ENCODE measurements at regions of chr19 and their contacts with region 1.

Region 1: DNA sequence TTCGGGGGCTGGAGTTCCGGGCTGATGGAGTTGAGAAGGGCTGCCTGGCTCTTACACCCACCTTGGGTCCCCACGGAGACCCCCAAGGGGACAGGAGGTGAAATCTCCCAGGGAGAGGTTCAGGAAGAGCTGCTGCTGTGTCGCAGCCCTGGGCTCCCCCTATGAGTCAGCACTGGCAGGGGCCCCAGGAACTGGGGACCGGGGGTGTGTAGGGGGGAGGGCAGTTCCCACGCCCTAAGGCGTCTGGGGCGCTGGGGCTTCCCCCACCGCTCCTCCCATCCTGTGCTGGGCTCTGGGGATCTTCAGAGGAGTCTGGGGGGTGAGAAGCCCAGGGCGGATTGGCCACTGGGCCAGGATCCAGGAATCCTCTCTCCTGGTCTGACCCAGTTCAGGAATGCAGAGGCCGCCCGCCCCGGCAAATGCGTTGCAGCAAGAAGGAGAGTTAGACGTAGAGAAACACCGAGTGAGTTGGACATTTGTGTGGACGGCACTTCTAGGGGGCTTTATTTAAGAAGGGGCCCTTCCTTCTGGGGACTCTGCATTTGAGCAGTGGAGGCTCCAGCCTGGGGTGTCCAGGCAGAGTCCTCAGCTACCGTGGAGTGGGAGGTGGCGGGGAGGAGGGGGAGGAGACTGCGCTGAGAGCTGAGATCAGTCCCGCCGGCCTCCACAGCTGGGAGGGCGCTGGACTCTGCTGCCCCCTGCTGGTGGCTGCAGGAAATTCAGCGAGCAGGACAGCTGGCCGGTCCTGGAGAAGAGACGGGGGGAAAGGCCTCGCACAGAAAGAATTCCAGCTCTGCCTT is 15.0 kb upstream of the NANOS3 start:
- DNase-seq: peak; percentile 97
- H3K4me3 Mint-ChIP-seq: peak overlapping the region; percentile 98
- H3K27ac Mint-ChIP-seq: peak overlapping the region; percentile 98
- H3K4me1 Mint-ChIP-seq: peaks cover 41% of the 10 kb centered on the region
- H3K27me3 Mint-ChIP-seq: peaks cover 24% of the 10 kb centered on the region

Region 2: GRCh38 chr19:13277104-13277809 is 584.7 kb before region 1 on chr19:
- intact Hi-C with region 1: loop called (anchors 2 kb)
- DNase-seq: peak; percentile 93
- H3K4me3 Mint-ChIP-seq: peak overlapping the region; percentile 32
- H3K27ac Mint-ChIP-seq: peak overlapping the region; percentile 79
- H3K4me1 Mint-ChIP-seq: peaks cover 7% of the 10 kb centered on the region
- H3K27me3 Mint-ChIP-seq: peaks cover 8% of the 10 kb centered on the region

Region 3: DNA sequence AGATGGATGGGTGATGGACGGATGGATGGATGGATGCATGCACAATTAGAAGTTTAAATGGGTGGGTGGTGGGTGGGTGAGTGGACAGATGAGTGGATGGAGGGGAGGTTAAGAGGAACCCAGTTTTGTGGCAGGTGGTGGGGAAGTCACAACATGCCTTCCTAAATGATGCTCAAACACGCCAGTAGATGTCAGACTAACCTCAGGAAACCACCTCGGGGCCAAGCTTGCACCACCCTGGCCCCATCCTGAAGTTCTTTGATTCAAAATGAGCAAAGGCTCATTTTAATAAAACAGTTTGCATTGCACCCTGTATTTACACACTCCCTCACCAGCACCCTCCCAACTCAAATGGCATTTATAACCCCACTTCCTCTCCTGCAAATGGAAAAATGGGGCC is 264.3 kb before region 1 on chr19:
- intact Hi-C with region 1: loop called (anchors 1 kb)
- DNase-seq: peak; percentile 85
- H3K4me3 Mint-ChIP-seq: no peak overlapping the region
- H3K27ac Mint-ChIP-seq: no peak overlapping the region
- H3K4me1 Mint-ChIP-seq: peaks cover 2% of the 10 kb centered on the region
- H3K27me3 Mint-ChIP-seq: no peaks in the 10 kb centered on the region

Region 4: DNA sequence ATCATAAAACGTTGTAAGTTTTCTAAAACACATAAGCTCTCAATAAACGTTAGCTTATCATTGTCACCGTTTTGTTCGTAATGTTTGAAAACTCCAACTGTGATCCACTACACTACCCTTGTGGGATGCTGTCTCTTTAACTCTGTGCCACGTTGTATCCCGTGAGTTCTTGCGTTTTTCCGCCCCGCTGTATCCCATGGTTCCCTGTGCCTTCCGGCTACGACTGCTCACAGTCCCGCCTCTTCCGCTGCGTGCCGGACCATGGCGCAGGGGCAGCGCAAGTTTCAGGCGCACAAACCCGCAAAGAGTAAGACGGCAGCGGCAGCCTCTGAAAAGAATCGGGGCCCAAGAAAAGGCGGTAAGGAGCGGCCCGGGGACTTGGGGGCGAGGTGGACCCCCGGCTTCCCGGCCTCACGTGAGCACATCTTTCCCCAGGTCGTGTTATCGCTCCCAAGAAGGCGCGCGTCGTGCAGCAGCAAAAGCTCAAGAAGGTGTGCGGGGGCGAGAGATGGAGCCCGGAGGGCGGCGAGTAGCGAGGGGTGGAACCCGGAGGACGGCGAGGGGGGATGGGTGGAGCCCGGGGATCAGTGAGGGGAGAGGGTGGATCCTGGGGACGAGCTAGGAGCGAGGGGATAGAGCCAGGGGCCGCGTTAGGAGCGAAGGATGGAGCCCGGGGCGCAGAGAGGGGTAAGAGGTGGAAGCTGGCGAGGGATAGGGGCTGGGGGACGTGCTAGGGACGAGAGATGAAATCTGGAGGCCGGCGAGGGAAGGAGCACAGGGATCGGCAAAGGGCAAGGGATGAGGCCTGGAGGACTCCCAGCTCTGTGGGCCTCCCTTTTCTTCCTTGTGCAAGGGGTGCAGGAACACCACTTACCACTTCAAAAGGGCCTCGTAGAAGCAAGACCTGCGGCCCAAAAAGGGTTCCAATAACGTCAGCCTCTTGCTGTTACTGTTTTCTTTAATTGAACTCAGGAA is 87.4 kb before region 1 on chr19 and contains the start of gene C19orf53:
- intact Hi-C with region 1: loop called (anchors 1 kb)
- DNase-seq: peak; percentile 98
- H3K4me3 Mint-ChIP-seq: peak within 1 kb of the TSS; percentile 99
- H3K27ac Mint-ChIP-seq: peak within 1 kb of the TSS; percentile 94
- H3K4me1 Mint-ChIP-seq: peaks cover 20% of the 10 kb centered on the region
- H3K27me3 Mint-ChIP-seq: no peaks in the 10 kb centered on the region
- total RNA-seq, gene C19orf53: 142 and 143 TPM in 2 replicates

Region 5: DNA sequence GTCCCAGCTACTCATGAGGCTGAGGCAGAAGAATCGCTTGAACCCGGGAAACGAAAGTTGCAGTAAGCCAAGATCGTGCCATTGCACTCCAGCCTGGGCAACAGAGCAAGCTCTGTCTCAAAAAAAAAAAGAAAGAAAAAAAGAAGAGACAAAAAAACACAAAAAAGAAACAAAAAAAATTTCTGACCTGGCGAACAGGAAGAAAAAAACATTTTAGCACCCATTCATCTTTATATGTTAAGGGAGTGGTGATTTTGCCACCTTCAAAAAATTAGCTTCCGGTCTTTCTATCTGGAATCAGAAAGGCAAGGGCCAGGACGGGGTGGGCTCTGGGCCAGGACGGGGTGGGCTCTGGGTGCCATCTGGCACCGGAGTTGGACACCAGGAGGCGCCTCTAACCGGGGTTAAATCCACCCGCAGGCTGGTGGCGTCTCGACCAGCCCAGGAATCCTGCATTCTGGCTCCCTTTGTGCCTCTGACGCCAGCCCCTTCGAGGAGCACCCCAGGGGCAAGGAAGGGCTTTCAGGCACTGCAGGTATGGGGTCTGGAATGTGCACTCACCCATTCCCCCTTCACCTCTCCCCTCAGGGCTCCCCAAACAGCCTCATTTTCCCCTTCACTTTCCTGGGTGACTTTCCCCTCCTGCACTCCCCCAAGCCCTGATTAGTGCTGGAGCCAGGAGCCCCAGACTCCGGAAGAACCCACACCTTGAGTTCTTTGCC is 77.0 kb before region 1 on chr19:
- intact Hi-C with region 1: loop called (anchors 1 kb)
- DNase-seq: peak; percentile 91
- H3K4me3 Mint-ChIP-seq: peak overlapping the region; percentile 35
- H3K27ac Mint-ChIP-seq: peak overlapping the region; percentile 25
- H3K4me1 Mint-ChIP-seq: peaks cover 22% of the 10 kb centered on the region
- H3K27me3 Mint-ChIP-seq: no peaks in the 10 kb centered on the region

Region 6: DNA sequence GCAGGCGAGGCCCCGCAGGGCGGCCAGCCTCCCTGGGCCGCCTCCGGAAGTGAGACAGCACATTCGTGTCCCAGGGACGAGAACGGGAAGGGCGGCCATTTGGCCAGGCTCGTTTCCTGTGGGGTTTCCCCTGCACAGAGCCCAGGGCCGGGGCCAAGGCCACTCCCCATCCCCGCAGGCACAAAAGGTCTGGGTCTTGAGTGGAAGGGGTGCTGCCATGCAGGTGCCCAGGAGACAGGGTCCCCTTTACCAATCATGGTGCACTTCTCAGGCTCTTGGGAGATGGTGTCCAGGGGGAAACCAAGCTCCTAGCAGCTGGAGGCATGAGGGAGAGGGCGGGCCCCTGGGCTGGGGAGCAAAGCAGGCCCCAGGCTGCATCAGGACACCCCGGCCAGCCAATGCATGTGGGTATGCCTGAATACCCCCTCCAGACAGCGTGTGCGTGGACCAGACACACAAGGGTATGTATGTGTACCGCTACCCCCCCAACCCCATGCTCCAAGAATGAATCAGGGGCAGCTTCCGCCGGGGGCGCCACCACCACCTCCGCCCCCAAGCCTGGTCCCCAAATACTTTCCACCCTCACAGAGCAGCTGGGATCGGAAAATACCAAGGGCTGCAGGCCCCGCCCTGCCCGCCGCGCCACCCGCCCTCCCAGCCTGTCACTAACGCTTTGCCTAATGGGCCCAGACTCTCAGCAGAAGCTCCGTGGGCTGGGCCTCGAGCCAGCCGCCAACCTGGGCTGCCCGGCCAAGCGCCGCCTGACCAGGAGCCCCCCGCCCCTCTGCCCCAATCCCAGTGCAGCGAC is 22.6 kb before region 1 on chr19:
- intact Hi-C with region 1: loop called (anchors 2 kb)
- DNase-seq: peak; percentile 94
- H3K4me3 Mint-ChIP-seq: peak overlapping the region; percentile 94
- H3K27ac Mint-ChIP-seq: peak overlapping the region; percentile 89
- H3K4me1 Mint-ChIP-seq: peaks cover 37% of the 10 kb centered on the region
- H3K27me3 Mint-ChIP-seq: no peaks in the 10 kb centered on the region

Region 7: GRCh38 chr19:13846557-13847406 is 15.2 kb before region 1 on chr19:
- intact Hi-C with region 1: loop called (anchors 1 kb)
- DNase-seq: peak; percentile 99
- H3K4me3 Mint-ChIP-seq: peak overlapping the region; percentile 87
- H3K27ac Mint-ChIP-seq: peak overlapping the region; percentile 99
- H3K4me1 Mint-ChIP-seq: peaks cover 46% of the 10 kb centered on the region
- H3K27me3 Mint-ChIP-seq: no peaks in the 10 kb centered on the region

Region 8: GRCh38 chr19:13952154-13953035 is 90.5 kb after region 1 on chr19 and contains the start of gene DCAF15:
- intact Hi-C with region 1: no loop called
- DNase-seq: peak; percentile 100
- H3K4me3 Mint-ChIP-seq: peak within 1 kb of the TSS; percentile 99
- H3K27ac Mint-ChIP-seq: peak within 1 kb of the TSS; percentile 97
- H3K4me1 Mint-ChIP-seq: peaks cover 14% of the 10 kb centered on the region
- H3K27me3 Mint-ChIP-seq: peaks cover 4% of the 10 kb centered on the region
- total RNA-seq, gene DCAF15: 61.5 and 63.2 TPM in 2 replicates

Region 9: GRCh38 chr19:13962699-13963602 is 101.0 kb after region 1 on chr19:
- intact Hi-C with region 1: no loop called
- DNase-seq: no peak
- H3K4me3 Mint-ChIP-seq: no peak overlapping the region
- H3K27ac Mint-ChIP-seq: no peak overlapping the region
- H3K4me1 Mint-ChIP-seq: no peaks in the 10 kb centered on the region
- H3K27me3 Mint-ChIP-seq: no peaks in the 10 kb centered on the region

Region 10: DNA sequence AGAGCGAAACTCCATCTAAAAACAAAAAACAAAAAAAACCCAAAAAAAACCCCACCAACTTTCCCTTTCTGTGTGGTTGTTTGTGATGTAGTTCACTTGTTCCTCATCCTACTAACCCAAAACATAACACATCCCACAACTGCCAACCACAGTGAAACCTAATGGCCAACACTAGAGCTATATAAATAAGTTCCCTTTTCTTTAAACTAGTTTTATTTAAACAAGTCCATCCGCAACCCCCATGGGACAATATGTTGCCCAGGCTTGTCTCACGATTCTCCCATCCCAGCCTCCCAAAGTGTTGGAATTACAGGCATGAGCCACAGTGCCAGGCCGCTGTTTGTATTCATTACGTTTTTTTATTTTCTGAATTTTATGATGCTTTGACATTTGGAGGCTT is 448.1 kb after region 1 on chr19:
- intact Hi-C with region 1: no loop called
- DNase-seq: no peak
- H3K4me3 Mint-ChIP-seq: no peak overlapping the region
- H3K27ac Mint-ChIP-seq: no peak overlapping the region
- H3K4me1 Mint-ChIP-seq: peaks cover 10% of the 10 kb centered on the region
- H3K27me3 Mint-ChIP-seq: no peaks in the 10 kb centered on the region